Activated CD8-positive, alpha-beta T cell treated with anti-CD3 and anti-CD28 coated beads for 36 hours (primary cell): ENCODE measurements at regions of chr13 and their contacts with region 1.

Region 1: GRCh38 chr13:24220086-24220703 is 59.7 kb downstream of the SPATA13 start:
- DNase-seq: peak; percentile 77
- ATAC-seq: peak; percentile 86
- H3K4me3 Mint-ChIP-seq: no peak overlapping the region
- H3K27ac Mint-ChIP-seq: no peak overlapping the region
- H3K4me1 Mint-ChIP-seq: peaks cover 43% of the 10 kb centered on the region
- H3K27me3 Mint-ChIP-seq: no peaks in the 10 kb centered on the region
- CTCF ChIP-seq: peak; percentile 72

Region 2: DNA sequence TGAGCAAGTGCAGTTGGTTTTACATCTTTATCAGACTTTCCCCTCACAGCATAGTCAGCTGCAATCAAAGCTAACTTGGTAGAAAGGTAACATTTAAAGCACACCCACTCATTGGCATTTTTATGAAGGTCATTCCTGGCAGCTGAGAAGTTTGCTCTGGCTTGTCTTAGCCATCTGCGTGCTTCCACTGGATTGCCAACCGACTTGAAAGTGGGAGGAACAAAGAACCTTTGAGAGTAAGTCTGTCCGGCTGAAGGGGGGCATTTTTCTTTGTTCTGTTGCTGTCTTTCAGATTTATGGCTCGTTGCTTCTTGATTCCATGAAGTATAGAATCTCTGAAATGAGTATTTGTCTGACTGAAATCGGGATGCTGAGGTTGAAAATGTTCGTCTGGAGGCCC is 889.8 kb before region 1 on chr13:
- CTCF ChIA-PET with region 1: no interaction called
- POLR2A ChIA-PET with region 1: no interaction called
- intact Hi-C with region 1: no loop called
- DNase-seq: no peak
- ATAC-seq: no peak
- H3K4me3 Mint-ChIP-seq: no peak overlapping the region
- H3K27ac Mint-ChIP-seq: no peak overlapping the region
- H3K4me1 Mint-ChIP-seq: no peaks in the 10 kb centered on the region
- H3K27me3 Mint-ChIP-seq: no peaks in the 10 kb centered on the region
- CTCF ChIP-seq: no peak

Region 3: DNA sequence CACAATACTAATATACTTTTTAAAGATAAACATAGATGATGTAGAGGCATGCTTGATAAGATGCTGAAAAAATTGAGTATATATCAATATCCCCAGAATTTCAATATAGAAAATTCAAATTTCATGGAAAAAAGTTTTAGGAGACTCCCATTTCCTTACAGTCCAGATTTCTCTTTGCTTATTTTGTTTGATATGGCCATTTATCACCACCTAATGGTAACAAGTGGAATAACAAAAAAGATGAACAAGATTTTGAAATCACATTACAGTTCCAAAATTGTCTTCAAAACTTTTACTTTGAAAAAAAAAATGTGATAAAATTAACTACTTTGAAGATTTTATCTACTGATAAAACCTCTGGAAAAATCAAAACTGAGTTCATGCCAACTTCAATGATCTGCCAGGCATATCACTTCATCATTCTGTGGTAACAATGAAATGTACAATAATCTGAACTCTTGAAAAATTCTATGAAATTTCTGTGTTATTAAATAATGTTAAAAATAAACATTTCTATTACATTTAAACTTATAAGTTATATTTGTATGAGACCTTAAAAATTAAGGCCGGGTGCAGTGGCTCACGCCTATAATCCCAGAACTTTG is 348.5 kb before region 1 on chr13:
- CTCF ChIA-PET with region 1: no interaction called
- POLR2A ChIA-PET with region 1: no interaction called
- intact Hi-C with region 1: no loop called
- DNase-seq: no peak
- ATAC-seq: no peak
- H3K4me3 Mint-ChIP-seq: no peak overlapping the region
- H3K27ac Mint-ChIP-seq: no peak overlapping the region
- H3K4me1 Mint-ChIP-seq: no peaks in the 10 kb centered on the region
- H3K27me3 Mint-ChIP-seq: no peaks in the 10 kb centered on the region
- CTCF ChIP-seq: peak; percentile 78

Region 4: GRCh38 chr13:23921451-23921888 is 298.7 kb before region 1 on chr13:
- CTCF ChIA-PET with region 1: interaction called, 4 read pairs
- POLR2A ChIA-PET with region 1: no interaction called
- intact Hi-C with region 1: loop called (anchors 10 kb)
- DNase-seq: peak; percentile 13
- ATAC-seq: no peak
- H3K4me3 Mint-ChIP-seq: no peak overlapping the region
- H3K27ac Mint-ChIP-seq: no peak overlapping the region
- H3K4me1 Mint-ChIP-seq: no peaks in the 10 kb centered on the region
- H3K27me3 Mint-ChIP-seq: peaks cover 27% of the 10 kb centered on the region
- CTCF ChIP-seq: peak; percentile 81

Region 5: GRCh38 chr13:24020375-24020830 is 199.8 kb before region 1 on chr13:
- CTCF ChIA-PET with region 1: interaction called, 50 read pairs
- POLR2A ChIA-PET with region 1: no interaction called
- intact Hi-C with region 1: loop called (anchors 1 kb)
- DNase-seq: peak; percentile 69
- ATAC-seq: peak; percentile 47
- H3K4me3 Mint-ChIP-seq: no peak overlapping the region
- H3K27ac Mint-ChIP-seq: no peak overlapping the region
- H3K4me1 Mint-ChIP-seq: peaks cover 8% of the 10 kb centered on the region
- H3K27me3 Mint-ChIP-seq: no peaks in the 10 kb centered on the region
- CTCF ChIP-seq: peak; percentile 79

Region 6: GRCh38 chr13:24053519-24054251 is 166.5 kb before region 1 on chr13:
- CTCF ChIA-PET with region 1: interaction called, 58 read pairs
- POLR2A ChIA-PET with region 1: interaction called, 3 read pairs
- intact Hi-C with region 1: loop called (anchors 1 kb)
- DNase-seq: peak; percentile 77
- ATAC-seq: peak; percentile 98
- H3K4me3 Mint-ChIP-seq: no peak overlapping the region
- H3K27ac Mint-ChIP-seq: no peak overlapping the region
- H3K4me1 Mint-ChIP-seq: peaks cover 8% of the 10 kb centered on the region
- H3K27me3 Mint-ChIP-seq: peaks cover 1% of the 10 kb centered on the region
- CTCF ChIP-seq: peak; percentile 85

Region 7: DNA sequence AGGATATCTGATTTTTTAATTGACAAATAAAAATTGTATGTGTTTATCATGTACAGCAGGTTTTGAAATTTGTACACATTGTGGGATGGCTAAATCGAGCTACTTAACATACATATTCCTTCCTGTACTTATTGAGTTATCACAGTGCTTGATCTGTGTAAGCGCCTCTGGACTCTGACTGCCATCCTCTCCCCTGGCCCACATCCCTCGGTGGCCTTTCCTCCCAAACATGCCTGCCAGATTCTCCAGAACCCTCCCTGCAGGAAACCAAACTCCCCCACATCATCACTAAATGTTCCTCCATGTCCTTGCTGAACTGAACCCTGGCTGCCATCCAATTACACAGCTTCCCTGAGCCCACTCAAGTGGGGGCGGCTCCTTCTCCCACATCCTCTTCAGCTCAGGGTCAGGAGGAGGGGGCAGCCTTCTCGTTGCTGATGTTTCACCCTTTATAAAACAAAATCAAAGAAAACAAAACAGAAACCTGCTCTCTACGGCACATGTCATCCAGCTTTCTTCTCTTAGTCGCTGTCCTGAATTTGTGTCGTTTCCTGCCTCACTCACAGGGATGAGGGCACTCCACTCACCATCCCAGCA is 156.8 kb before region 1 on chr13:
- CTCF ChIA-PET with region 1: interaction called, 11 read pairs
- POLR2A ChIA-PET with region 1: no interaction called
- intact Hi-C with region 1: no loop called
- DNase-seq: peak; percentile 54
- ATAC-seq: peak; percentile 69
- H3K4me3 Mint-ChIP-seq: no peak overlapping the region
- H3K27ac Mint-ChIP-seq: peak overlapping the region; percentile 61
- H3K4me1 Mint-ChIP-seq: peaks cover 28% of the 10 kb centered on the region
- H3K27me3 Mint-ChIP-seq: peaks cover 2% of the 10 kb centered on the region
- CTCF ChIP-seq: no peak

Region 8: GRCh38 chr13:24173795-24174194 is 46.4 kb before region 1 on chr13:
- CTCF ChIA-PET with region 1: interaction called, 6 read pairs
- POLR2A ChIA-PET with region 1: no interaction called
- intact Hi-C with region 1: loop called (anchors 5 kb)
- DNase-seq: no peak
- ATAC-seq: peak; percentile 50
- H3K4me3 Mint-ChIP-seq: peak overlapping the region; percentile 10
- H3K27ac Mint-ChIP-seq: peak overlapping the region; percentile 78
- H3K4me1 Mint-ChIP-seq: peaks cover 61% of the 10 kb centered on the region
- H3K27me3 Mint-ChIP-seq: no peaks in the 10 kb centered on the region
- CTCF ChIP-seq: no peak

Region 9: GRCh38 chr13:24209138-24209537 is 11.1 kb before region 1 on chr13:
- CTCF ChIA-PET with region 1: no interaction called
- POLR2A ChIA-PET with region 1: no interaction called
- intact Hi-C with region 1: no loop called
- DNase-seq: no peak
- ATAC-seq: no peak
- H3K4me3 Mint-ChIP-seq: no peak overlapping the region
- H3K27ac Mint-ChIP-seq: no peak overlapping the region
- H3K4me1 Mint-ChIP-seq: peaks cover 34% of the 10 kb centered on the region
- H3K27me3 Mint-ChIP-seq: no peaks in the 10 kb centered on the region
- CTCF ChIP-seq: no peak

Region 10: GRCh38 chr13:24254146-24254841 is 34.1 kb after region 1 on chr13:
- CTCF ChIA-PET with region 1: no interaction called
- POLR2A ChIA-PET with region 1: no interaction called
- intact Hi-C with region 1: no loop called
- DNase-seq: peak; percentile 81
- ATAC-seq: peak; percentile 68
- H3K4me3 Mint-ChIP-seq: peak overlapping the region; percentile 82
- H3K27ac Mint-ChIP-seq: peak overlapping the region; percentile 90
- H3K4me1 Mint-ChIP-seq: peaks cover 77% of the 10 kb centered on the region
- H3K27me3 Mint-ChIP-seq: no peaks in the 10 kb centered on the region
- CTCF ChIP-seq: no peak